CD4-positive, alpha-beta T cell (primary cell): ENCODE measurements at regions of chr6 and their contacts with region 1.

Region 1: GRCh38 chr6:25263657-25264056 is 15.5 kb upstream of the CARMIL1 start:
- DNase-seq: no peak
- ATAC-seq: no peak
- H3K4me3 ChIP-seq: no peak overlapping the region
- H3K4me3 Mint-ChIP-seq: no peak overlapping the region
- H3K27ac ChIP-seq: no peak overlapping the region
- H3K27ac Mint-ChIP-seq: no peak overlapping the region
- H3K4me1 ChIP-seq: no peaks in the 10 kb centered on the region
- H3K4me1 Mint-ChIP-seq: peaks cover 4% of the 10 kb centered on the region
- H3K27me3 ChIP-seq: no peaks in the 10 kb centered on the region
- H3K27me3 Mint-ChIP-seq: peaks cover 6% of the 10 kb centered on the region
- CTCF ChIP-seq: no peak

Region 2: GRCh38 chr6:25490018-25490801 is 226.6 kb after region 1 on chr6:
- CTCF ChIA-PET with region 1: interaction called, 45 read pairs
- POLR2A ChIA-PET with region 1: interaction called, 14 read pairs
- intact Hi-C with region 1: loop called (anchors 1 kb)
- DNase-seq: peak; percentile 39 to 82 (median 58)
- ATAC-seq: peak; percentile 82
- H3K4me3 ChIP-seq: no peak overlapping the region
- H3K4me3 Mint-ChIP-seq: no peak overlapping the region
- H3K27ac ChIP-seq: no peak overlapping the region
- H3K27ac Mint-ChIP-seq: peak overlapping the region; percentile 8
- H3K4me1 ChIP-seq: peaks cover 7% of the 10 kb centered on the region
- H3K4me1 Mint-ChIP-seq: peaks cover 8% of the 10 kb centered on the region
- H3K27me3 ChIP-seq: no peaks in the 10 kb centered on the region
- H3K27me3 Mint-ChIP-seq: no peaks in the 10 kb centered on the region
- CTCF ChIP-seq: peak; percentile 88

Region 3: DNA sequence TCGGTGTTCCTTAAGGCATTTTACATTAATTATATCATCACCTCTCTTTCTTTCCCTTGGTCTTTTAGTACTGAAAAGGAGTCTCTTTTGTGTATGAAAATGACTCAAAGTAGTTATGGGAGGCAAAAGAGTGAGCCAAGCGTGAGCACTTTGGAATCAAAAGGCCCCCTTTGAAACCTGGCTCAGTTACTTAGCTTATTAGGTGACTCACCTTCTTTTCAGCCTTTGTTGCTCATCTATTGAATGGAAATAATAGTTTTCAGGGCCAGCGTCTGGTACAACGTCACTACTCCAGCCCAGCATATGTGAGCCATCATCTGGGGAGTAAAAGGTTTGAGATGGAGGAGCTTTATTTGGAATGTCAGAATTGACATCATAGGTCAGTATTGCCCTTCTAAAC is 241.0 kb after region 1 on chr6:
- CTCF ChIA-PET with region 1: no interaction called
- POLR2A ChIA-PET with region 1: no interaction called
- intact Hi-C with region 1: no loop called
- DNase-seq: no peak
- ATAC-seq: no peak
- H3K4me3 ChIP-seq: no peak overlapping the region
- H3K4me3 Mint-ChIP-seq: no peak overlapping the region
- H3K27ac ChIP-seq: no peak overlapping the region
- H3K27ac Mint-ChIP-seq: no peak overlapping the region
- H3K4me1 ChIP-seq: no peaks in the 10 kb centered on the region
- H3K4me1 Mint-ChIP-seq: no peaks in the 10 kb centered on the region
- H3K27me3 ChIP-seq: no peaks in the 10 kb centered on the region
- H3K27me3 Mint-ChIP-seq: no peaks in the 10 kb centered on the region
- CTCF ChIP-seq: no peak

Region 4: DNA sequence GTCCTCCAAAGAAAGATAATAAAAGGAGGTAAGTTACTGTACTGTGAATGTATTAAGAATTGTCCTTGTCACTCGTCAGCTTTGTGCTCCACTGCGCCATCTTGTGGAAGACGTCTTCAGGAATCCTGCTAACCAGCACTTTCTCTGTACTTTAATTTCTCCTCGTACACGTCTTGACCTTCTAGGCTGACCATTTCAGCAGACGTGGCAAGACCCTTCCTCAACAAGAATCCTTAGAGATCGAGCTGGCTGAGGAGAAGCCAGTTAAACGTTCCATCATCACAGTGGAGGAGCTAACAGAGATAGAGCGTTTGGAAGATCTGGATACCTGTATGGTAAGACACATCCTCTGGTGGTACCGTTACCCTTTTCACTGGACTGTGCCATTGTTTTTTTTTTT is 292.9 kb after region 1 on chr6:
- CTCF ChIA-PET with region 1: interaction called, 5 read pairs
- POLR2A ChIA-PET with region 1: interaction called, 3 read pairs
- intact Hi-C with region 1: loop called (anchors 1 kb)
- DNase-seq: peak; percentile 60 to 85 (median 74)
- ATAC-seq: no peak
- H3K4me3 ChIP-seq: no peak overlapping the region
- H3K4me3 Mint-ChIP-seq: no peak overlapping the region
- H3K27ac ChIP-seq: no peak overlapping the region
- H3K27ac Mint-ChIP-seq: no peak overlapping the region
- H3K4me1 ChIP-seq: no peaks in the 10 kb centered on the region
- H3K4me1 Mint-ChIP-seq: no peaks in the 10 kb centered on the region
- H3K27me3 ChIP-seq: no peaks in the 10 kb centered on the region
- H3K27me3 Mint-ChIP-seq: no peaks in the 10 kb centered on the region
- CTCF ChIP-seq: peak; percentile 87

Region 5: DNA sequence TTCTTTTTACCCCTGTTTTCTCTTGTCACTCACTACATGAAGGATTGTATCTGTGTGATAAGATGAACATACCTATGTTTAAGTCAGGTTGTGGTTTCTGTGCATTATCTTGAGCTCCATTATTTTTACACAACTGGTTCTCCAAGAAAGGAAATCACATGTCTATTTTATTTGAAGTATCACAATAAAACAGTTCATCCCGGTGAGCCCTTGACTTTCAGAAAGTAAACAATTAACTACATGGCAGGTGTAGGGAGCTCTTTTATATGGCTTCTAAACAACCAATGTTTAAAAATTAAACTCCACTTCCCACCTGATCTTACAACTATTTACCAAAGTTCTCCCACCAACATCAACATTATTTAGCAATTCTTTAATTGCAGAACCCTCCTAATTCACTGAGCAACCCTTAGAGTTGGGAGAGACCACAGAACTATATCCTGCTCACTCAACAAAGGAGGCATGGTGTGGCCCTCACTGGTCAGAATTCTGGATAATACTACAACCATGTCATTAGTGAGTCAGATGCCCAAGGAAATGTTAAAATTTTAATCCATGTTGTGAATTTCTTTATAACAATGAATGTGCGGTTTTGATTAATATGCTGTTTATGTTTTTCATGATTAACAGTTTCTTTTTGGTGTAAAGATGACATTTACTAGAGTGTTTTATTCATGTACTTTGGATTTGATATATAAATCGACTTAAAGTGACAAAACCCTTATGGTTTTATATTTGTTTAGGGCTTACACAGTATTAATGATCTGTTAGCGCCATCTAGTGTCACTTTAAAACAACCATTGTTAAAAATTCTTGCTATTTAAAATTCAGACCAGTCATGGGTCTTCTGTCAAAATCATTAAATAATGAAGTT is 338.4 kb after region 1 on chr6:
- CTCF ChIA-PET with region 1: interaction called, 9 read pairs
- POLR2A ChIA-PET with region 1: no interaction called
- intact Hi-C with region 1: loop called (anchors 1 to 2 kb)
- DNase-seq: peak in 3 of 14 experiments; percentile 55 to 75 (median 69)
- ATAC-seq: no peak
- H3K4me3 ChIP-seq: no peak overlapping the region
- H3K4me3 Mint-ChIP-seq: no peak overlapping the region
- H3K27ac ChIP-seq: no peak overlapping the region
- H3K27ac Mint-ChIP-seq: no peak overlapping the region
- H3K4me1 ChIP-seq: no peaks in the 10 kb centered on the region
- H3K4me1 Mint-ChIP-seq: peaks cover 5% of the 10 kb centered on the region
- H3K27me3 ChIP-seq: no peaks in the 10 kb centered on the region
- H3K27me3 Mint-ChIP-seq: no peaks in the 10 kb centered on the region
- CTCF ChIP-seq: peak; percentile 81

Region 6: DNA sequence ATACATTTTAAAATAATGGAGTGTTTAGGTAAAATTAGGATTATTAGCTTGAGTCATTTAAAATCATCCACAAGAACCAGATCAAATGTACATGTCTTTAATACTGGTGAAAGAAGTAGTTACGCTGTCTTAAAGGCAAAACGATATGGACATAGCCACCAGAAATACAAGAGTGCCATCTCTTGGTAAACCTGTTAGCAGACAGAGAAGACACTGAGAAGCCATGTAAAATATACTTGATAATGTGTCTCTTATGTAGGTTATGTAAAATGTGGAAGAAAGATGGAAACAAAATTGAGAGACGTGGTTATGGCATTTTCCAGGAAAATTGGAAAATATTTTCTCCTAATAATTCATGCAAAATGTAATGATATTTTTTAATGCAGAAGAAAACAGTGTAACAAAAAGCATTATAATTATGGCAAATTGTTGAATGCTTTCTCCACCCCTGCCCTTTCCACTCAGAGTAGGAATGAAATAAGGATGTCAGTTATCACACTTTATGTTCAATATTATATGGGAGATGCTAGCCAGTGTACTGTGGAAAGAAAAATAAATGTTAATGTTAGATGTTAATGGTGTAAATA is 679.0 kb after region 1 on chr6:
- CTCF ChIA-PET with region 1: no interaction called
- POLR2A ChIA-PET with region 1: no interaction called
- intact Hi-C with region 1: loop called (anchors 5 kb)
- DNase-seq: peak in 3 of 14 experiments; percentile 54 to 70 (median 66)
- ATAC-seq: peak; percentile 49
- H3K4me3 ChIP-seq: no peak overlapping the region
- H3K4me3 Mint-ChIP-seq: no peak overlapping the region
- H3K27ac ChIP-seq: no peak overlapping the region
- H3K27ac Mint-ChIP-seq: no peak overlapping the region
- H3K4me1 ChIP-seq: peaks cover 8% of the 10 kb centered on the region
- H3K4me1 Mint-ChIP-seq: peaks cover 9% of the 10 kb centered on the region
- H3K27me3 ChIP-seq: no peaks in the 10 kb centered on the region
- H3K27me3 Mint-ChIP-seq: peaks cover 5% of the 10 kb centered on the region
- CTCF ChIP-seq: peak; percentile 57